ENCODE measurements at regions of chr2 and their contacts with region 1.

Region 1: DNA sequence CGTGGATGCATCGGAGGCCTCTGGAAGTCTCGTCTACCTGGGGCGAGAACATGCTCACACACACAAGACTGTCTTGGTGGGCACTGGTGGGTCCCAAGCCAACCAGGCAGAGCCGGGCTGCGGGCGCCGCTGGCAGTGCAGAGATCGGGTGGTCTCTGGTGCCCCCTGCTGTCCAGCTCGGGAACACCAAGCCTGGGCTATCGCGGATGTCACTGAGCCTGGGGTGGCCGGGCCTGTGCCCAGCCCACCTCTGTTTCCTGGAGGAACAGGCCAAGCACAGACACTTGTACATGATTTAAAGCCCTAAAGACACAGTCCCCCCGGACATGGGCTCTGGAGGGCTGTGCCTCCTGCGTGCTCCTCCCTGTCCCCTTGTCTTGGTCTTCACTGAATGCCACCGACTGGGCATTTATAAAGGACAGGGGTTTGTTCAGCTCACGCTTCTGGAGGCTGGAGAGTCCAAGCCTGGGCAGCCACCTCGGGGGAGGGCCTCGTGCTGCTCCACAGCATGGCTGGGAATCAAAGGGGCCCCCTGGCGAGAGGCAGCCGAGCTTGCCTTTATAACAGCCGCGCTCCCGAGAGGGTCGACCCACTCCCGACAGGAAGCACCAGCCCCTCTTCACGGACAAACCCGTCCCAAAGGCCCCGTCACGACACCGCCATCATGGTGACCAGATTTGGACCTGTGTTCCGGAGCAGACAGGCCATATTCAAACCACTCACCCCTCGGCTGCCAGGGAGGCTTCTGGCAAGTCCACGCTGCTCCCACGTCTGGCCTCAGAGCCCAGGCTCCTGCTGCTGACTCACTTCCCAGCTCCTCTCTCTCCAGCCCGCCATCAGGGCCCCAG is 3.6 kb upstream of the OTOS start:
- H3K4me3 Mint-ChIP-seq: no peak overlapping the region
- H3K27ac Mint-ChIP-seq: no peak overlapping the region
- H3K4me1 Mint-ChIP-seq: peaks cover 39% of the 10 kb centered on the region
- H3K27me3 Mint-ChIP-seq: peaks cover 25% of the 10 kb centered on the region

Region 2: GRCh38 chr2:240021488-240022104 is 122.4 kb before region 1 on chr2:
- intact Hi-C with region 1: no loop called
- H3K4me3 Mint-ChIP-seq: no peak overlapping the region
- H3K27ac Mint-ChIP-seq: no peak overlapping the region
- H3K4me1 Mint-ChIP-seq: peaks cover 19% of the 10 kb centered on the region
- H3K27me3 Mint-ChIP-seq: peaks cover 2% of the 10 kb centered on the region

Region 3: GRCh38 chr2:240060977-240061591 is 82.9 kb before region 1 on chr2:
- intact Hi-C with region 1: loop called (anchors 1 kb)
- H3K4me3 Mint-ChIP-seq: no peak overlapping the region
- H3K27ac Mint-ChIP-seq: no peak overlapping the region
- H3K4me1 Mint-ChIP-seq: no peaks in the 10 kb centered on the region
- H3K27me3 Mint-ChIP-seq: peaks cover 34% of the 10 kb centered on the region